ENCODE measurements at regions of chr15 and their contacts with region 1.

Region 1: GRCh38 chr15:41827880-41828806 is at the start of gene JMJD7:
- DNase-seq: peak; percentile 95
- H3K4me3 ChIP-seq: peak within 1 kb of the TSS; percentile 48 to 64
- H3K27ac ChIP-seq: peak within 1 kb of the TSS; percentile 77 to 79
- H3K4me1 ChIP-seq: peaks cover 10% of the 10 kb centered on the region
- H3K27me3 ChIP-seq: no peaks in the 10 kb centered on the region
- CTCF ChIP-seq: peak in 1 of 4 experiments; percentile 18
- POLR2A ChIP-seq: peak; percentile 88
- total RNA-seq, gene JMJD7: 20.7 to 56.6 TPM

Region 2: DNA sequence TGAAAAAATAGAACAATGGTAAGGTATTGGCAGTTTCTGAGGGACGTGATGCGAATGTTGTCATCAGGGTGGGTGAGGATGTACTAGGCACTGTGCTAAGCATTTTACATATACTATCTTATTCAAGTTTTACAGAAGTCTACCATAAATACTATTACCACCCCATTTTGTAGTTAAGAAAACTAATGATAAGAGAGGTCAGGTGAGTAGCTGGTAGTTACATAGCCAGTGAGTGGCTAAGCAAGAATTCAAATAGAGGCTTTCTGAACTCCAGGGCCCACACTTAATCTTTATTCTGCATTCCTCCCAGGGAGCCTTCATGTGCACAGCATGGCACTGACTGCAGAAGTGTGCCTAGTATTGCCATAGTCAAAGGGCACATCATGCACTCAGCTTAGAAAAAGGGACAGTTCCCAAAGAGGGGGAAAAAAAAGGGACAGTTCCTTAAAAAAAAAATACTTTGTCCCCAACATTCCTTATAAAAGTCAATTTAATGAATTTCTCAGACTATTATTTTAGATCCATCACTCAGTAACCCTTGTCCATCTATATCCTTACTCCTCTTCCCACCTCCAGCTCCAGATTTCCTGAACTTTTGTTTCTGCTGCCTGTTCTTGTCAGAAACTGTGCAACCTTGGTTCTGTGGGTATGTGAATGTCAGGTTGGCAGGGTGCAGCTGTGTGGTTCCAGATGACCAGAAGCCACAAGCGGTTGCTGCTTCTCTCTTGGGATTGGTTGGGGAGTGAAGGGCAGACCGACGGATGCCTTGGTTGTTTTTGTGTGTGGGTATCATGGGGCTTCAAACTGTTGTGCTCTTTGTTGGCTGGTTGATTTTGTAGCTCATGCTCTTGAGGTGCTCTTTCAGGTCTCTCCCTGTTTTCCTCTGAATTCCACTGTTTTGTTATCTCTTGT is 45.5 kb before region 1 on chr15:
- intact Hi-C with region 1: no loop called
- DNase-seq: no peak
- H3K4me3 ChIP-seq: no peak overlapping the region
- H3K27ac ChIP-seq: no peak overlapping the region
- H3K4me1 ChIP-seq: no peaks in the 10 kb centered on the region
- H3K27me3 ChIP-seq: no peaks in the 10 kb centered on the region
- CTCF ChIP-seq: no peak
- POLR2A ChIP-seq: no peak

Region 3: GRCh38 chr15:41904541-41905005 is 76.4 kb after region 1 on chr15:
- intact Hi-C with region 1: loop called (anchors 5 kb)
- DNase-seq: peak; percentile 51
- H3K4me3 ChIP-seq: no peak overlapping the region
- H3K27ac ChIP-seq: no peak overlapping the region
- H3K4me1 ChIP-seq: no peaks in the 10 kb centered on the region
- H3K27me3 ChIP-seq: no peaks in the 10 kb centered on the region
- CTCF ChIP-seq: peak; percentile 27 to 84 (median 72)
- POLR2A ChIP-seq: no peak